ENCODE measurements at regions of chr11 and their contacts with region 1.

Region 1: DNA sequence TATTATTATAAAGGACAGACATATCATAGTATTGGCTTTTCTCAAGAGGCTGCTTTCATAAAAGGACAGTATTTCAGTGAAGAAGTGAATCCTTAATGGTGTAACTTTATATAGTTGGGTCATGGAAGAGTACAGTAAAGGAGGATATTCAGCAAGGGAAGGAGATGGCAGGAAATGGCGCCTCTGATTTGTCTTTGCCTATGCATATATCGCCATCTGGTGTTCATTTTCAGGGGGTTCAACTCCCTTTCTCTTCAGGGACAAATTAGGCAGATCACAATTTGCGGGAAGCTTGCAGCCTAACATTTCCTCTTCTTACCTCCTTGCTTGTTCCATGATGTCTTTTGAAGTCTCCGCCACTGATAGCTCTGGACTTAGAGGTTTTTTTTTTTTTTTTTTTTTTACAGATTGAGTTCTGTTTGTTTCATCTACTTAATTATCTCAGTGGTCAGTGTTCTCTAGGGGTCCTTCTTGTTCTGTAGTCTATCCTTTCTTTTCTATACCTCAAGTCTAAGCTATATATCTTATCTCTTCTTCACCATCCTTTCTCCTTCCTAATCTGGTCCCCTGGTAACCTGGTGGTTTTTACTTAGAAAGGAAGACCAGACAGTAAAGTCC is 21.8 kb upstream of the RRM1 start:
- DNase-seq: peak in 9 of 14 experiments; percentile 19 to 87 (median 48)
- ATAC-seq: peak; percentile 78
- H3K4me3 ChIP-seq: no peak overlapping the region
- H3K4me3 Mint-ChIP-seq: no peak overlapping the region
- H3K27ac ChIP-seq: no peak overlapping the region
- H3K27ac Mint-ChIP-seq: peak overlapping the region; percentile 69
- H3K4me1 ChIP-seq: peaks cover 27% of the 10 kb centered on the region
- H3K4me1 Mint-ChIP-seq: peaks cover 84% of the 10 kb centered on the region
- H3K27me3 ChIP-seq: no peaks in the 10 kb centered on the region
- H3K27me3 Mint-ChIP-seq: no peaks in the 10 kb centered on the region
- CTCF ChIP-seq: peak; percentile 80

Region 2: GRCh38 chr11:3735827-3736226 is 336.9 kb before region 1 on chr11:
- CTCF ChIA-PET with region 1: no interaction called
- POLR2A ChIA-PET with region 1: no interaction called
- intact Hi-C with region 1: loop called in 1 of 2 experiments (anchors 10 kb)
- DNase-seq: no peak
- ATAC-seq: no peak
- H3K4me3 ChIP-seq: no peak overlapping the region
- H3K4me3 Mint-ChIP-seq: no peak overlapping the region
- H3K27ac ChIP-seq: no peak overlapping the region
- H3K27ac Mint-ChIP-seq: no peak overlapping the region
- H3K4me1 ChIP-seq: no peaks in the 10 kb centered on the region
- H3K4me1 Mint-ChIP-seq: peaks cover 12% of the 10 kb centered on the region
- H3K27me3 ChIP-seq: no peaks in the 10 kb centered on the region
- H3K27me3 Mint-ChIP-seq: no peaks in the 10 kb centered on the region
- CTCF ChIP-seq: no peak

Region 3: GRCh38 chr11:3824714-3825472 is 247.9 kb before region 1 on chr11:
- CTCF ChIA-PET with region 1: interaction called, 11 read pairs
- POLR2A ChIA-PET with region 1: no interaction called
- intact Hi-C with region 1: loop called in 1 of 2 experiments (anchors 1 kb)
- DNase-seq: peak; percentile 69 to 90 (median 80)
- ATAC-seq: peak; percentile 100
- H3K4me3 ChIP-seq: no peak overlapping the region
- H3K4me3 Mint-ChIP-seq: no peak overlapping the region
- H3K27ac ChIP-seq: peak overlapping the region in 1 of 2 donors; percentile 10
- H3K27ac Mint-ChIP-seq: peak overlapping the region; percentile 77
- H3K4me1 ChIP-seq: peaks cover 30% of the 10 kb centered on the region
- H3K4me1 Mint-ChIP-seq: peaks cover 38% of the 10 kb centered on the region
- H3K27me3 ChIP-seq: no peaks in the 10 kb centered on the region
- H3K27me3 Mint-ChIP-seq: no peaks in the 10 kb centered on the region
- CTCF ChIP-seq: peak; percentile 75

Region 4: DNA sequence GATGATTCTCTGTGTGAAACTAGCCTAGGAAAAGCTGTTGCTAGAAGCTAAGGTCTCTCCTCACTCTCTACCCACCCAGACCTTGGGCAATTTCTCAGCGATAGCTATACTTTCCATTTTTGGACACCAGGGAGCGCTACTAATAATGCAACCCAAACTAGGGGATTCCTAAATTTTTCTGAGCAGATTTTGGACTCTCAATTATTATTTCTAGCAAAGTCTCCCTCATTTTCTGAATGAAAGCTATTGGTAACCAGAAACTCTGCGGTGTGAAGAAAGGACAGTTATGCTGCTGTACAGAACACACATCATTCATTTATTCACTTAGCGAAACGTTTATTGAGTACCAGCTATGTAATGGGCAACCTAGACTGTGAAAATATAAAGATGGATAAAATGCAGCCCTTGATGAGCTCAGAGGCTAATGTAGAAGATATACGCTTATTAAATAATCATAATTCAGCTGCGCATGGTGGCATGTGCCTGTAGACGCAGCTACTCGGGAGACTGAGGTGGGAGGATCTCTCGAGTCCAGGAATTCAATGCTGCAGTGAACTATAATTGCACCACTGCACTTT is 223.4 kb before region 1 on chr11:
- CTCF ChIA-PET with region 1: interaction called, 52 read pairs
- POLR2A ChIA-PET with region 1: interaction called, 76 read pairs
- intact Hi-C with region 1: loop called (anchors 1 kb)
- DNase-seq: peak in 7 of 14 experiments; percentile 34 to 82 (median 69)
- ATAC-seq: peak; percentile 47
- H3K4me3 ChIP-seq: no peak overlapping the region
- H3K4me3 Mint-ChIP-seq: peak overlapping the region; percentile 1
- H3K27ac ChIP-seq: no peak overlapping the region
- H3K27ac Mint-ChIP-seq: peak overlapping the region; percentile 70
- H3K4me1 ChIP-seq: peaks cover 30% of the 10 kb centered on the region
- H3K4me1 Mint-ChIP-seq: peaks cover 45% of the 10 kb centered on the region
- H3K27me3 ChIP-seq: no peaks in the 10 kb centered on the region
- H3K27me3 Mint-ChIP-seq: no peaks in the 10 kb centered on the region
- CTCF ChIP-seq: peak; percentile 79

Region 5: DNA sequence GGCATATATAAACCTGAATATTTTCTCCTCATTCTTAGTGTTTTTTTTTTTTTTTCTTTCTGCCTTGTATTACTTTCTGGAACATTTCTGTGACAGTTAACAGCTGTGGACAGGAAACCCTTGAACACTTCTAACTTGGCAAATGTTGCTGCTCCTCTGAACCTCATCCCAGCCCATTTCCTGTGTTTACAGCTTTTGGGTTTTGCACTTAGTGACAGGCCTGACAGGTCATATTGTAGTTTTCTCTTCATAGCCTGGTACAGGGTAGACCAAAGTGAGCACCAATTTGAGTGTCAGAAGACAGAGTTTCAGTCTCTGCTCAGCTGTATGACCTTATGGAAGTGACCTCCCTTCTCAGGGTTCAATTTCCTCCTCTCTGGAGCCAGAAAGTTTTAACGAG is 125.7 kb before region 1 on chr11:
- CTCF ChIA-PET with region 1: interaction called, 11 read pairs
- POLR2A ChIA-PET with region 1: interaction called, 15 read pairs
- intact Hi-C with region 1: loop called (anchors 1 to 5 kb)
- DNase-seq: peak in 13 of 14 experiments; percentile 25 to 94 (median 42)
- ATAC-seq: peak; percentile 75
- H3K4me3 ChIP-seq: peak overlapping the region; percentile 39
- H3K4me3 Mint-ChIP-seq: peak overlapping the region; percentile 72
- H3K27ac ChIP-seq: peak overlapping the region; percentile 80 to 87
- H3K27ac Mint-ChIP-seq: peak overlapping the region; percentile 96
- H3K4me1 ChIP-seq: peaks cover 87% of the 10 kb centered on the region
- H3K4me1 Mint-ChIP-seq: peaks cover 95% of the 10 kb centered on the region
- H3K27me3 ChIP-seq: no peaks in the 10 kb centered on the region
- H3K27me3 Mint-ChIP-seq: no peaks in the 10 kb centered on the region
- CTCF ChIP-seq: no peak

Region 6: DNA sequence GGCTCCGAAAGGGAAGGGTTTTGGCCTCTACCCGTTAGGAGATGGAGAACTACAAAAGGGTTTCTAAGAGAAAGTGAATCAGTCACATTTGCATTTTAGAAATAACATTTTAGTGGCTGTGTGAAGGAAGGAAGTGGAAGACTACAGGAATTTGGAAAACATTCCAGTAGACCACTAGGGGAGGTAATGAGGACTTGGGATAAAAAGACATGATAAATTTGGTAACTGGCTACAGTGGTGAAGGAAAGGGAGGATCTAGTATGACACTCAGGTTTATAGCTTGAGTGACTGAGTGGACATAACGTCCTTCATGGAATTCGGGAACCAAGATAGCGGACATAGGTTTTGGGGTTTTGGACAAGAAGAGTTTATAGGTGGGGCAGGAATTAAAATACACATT is 14.8 kb after region 1 on chr11:
- CTCF ChIA-PET with region 1: interaction called, 9 read pairs
- POLR2A ChIA-PET with region 1: interaction called, 11 read pairs
- intact Hi-C with region 1: no loop called
- DNase-seq: no peak
- ATAC-seq: no peak
- H3K4me3 ChIP-seq: no peak overlapping the region
- H3K4me3 Mint-ChIP-seq: no peak overlapping the region
- H3K27ac ChIP-seq: no peak overlapping the region
- H3K27ac Mint-ChIP-seq: peak overlapping the region; percentile 97
- H3K4me1 ChIP-seq: peaks cover 54% of the 10 kb centered on the region
- H3K4me1 Mint-ChIP-seq: peaks cover 57% of the 10 kb centered on the region
- H3K27me3 ChIP-seq: no peaks in the 10 kb centered on the region
- H3K27me3 Mint-ChIP-seq: no peaks in the 10 kb centered on the region
- CTCF ChIP-seq: no peak

Region 7: GRCh38 chr11:4105916-4106315 is 33.1 kb after region 1 on chr11:
- CTCF ChIA-PET with region 1: no interaction called
- POLR2A ChIA-PET with region 1: no interaction called
- intact Hi-C with region 1: no loop called
- DNase-seq: no peak
- ATAC-seq: no peak
- H3K4me3 ChIP-seq: no peak overlapping the region
- H3K4me3 Mint-ChIP-seq: no peak overlapping the region
- H3K27ac ChIP-seq: no peak overlapping the region
- H3K27ac Mint-ChIP-seq: no peak overlapping the region
- H3K4me1 ChIP-seq: no peaks in the 10 kb centered on the region
- H3K4me1 Mint-ChIP-seq: peaks cover 14% of the 10 kb centered on the region
- H3K27me3 ChIP-seq: no peaks in the 10 kb centered on the region
- H3K27me3 Mint-ChIP-seq: no peaks in the 10 kb centered on the region
- CTCF ChIP-seq: no peak

Measured in CD4-positive, alpha-beta T cell (primary cell).